Dorsolateral prefrontal cortex (tissue), 120 donors: ENCODE measurements at regions of chr11 and their contacts with region 1.

Region 1: DNA sequence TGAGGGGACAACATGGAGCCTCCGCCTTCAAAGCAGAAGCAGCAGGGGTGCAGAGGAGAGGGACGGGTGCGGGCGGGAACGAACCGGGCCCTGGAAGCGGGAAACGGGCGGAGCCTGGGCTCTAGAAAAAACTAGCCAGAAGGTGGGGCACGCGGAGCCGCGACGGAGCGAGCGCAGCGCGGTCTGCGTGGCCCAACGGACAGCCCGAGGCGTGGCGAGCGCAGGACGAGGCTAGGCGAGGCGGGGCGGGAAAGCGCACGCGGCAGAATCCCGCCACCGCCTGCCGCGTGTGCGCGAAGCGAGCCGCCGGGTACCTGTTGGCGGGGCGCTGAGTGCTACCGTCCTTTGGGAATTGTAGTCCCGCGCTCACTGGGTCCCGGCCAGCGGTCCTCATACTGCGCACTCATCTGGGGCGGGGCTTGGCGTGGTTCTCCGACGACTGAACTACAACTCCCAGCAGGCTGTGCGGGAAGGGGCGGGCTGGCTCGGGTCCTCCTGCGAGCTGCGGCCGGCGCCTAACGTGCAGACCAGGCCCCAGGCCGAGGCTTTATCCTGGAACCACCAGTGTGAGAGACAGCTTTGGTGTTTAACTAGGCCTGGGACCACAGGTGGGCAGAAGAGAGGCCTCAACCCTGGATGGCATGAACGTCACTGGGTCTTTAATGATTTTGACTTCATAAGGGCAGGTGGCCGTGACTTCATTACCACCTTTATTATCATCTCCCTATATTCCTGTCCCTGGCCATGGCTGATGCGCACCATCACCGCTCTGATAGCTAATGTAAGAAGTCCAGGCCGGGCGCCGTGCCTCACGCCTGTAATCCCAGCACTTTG is at the start of gene ATL3:
- DNase-seq: peak; percentile 97 to 99 (median 98)
- H3K4me3 ChIP-seq: peak within 1 kb of the TSS; percentile 66 to 99 (median 92)
- H3K27ac ChIP-seq: peak within 1 kb of the TSS; percentile 18 to 99 (median 97)
- H3K27me3 ChIP-seq: no peaks in the 10 kb centered on the region
- CTCF ChIP-seq: peak in 46 of 56 donors; percentile 10 to 64 (median 42)
- total RNA-seq, gene ATL3: 15.2 to 40.3 (median 25.4) TPM

Region 2: DNA sequence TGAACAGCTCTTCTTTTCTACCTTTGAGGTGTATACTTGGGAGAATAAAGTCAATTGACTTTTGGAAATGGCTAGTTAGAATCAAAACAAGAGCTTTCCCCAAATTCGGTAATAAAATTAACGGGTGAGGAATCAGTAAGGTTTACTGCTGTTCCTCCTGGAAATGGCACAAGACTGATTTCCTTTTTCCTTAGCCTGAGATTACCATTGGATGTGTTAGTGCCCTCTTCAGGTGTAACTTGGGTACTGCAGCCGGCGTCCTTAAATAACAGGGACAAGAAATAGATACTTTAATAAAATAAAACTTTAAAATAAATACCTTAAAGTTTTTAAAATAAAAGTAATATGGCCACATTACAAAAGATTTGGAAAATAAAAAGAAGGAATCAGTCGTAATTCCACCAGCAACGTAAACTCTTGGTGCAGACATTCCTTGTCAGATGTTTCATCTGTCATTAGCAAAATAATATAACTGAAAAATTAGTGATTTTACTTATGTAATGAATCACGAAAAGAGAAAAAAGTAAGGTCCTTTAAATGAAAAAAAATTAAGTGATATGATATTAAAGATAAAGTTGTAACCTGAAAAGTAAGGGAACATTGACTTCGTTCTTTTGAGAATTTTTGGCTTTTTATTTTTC is 67.3 kb after region 1 on chr11:
- intact Hi-C with region 1: loop called in 1 of 2 experiments (anchors 1 kb)
- DNase-seq: peak; percentile 56 to 90 (median 66)
- H3K4me3 ChIP-seq: peak overlapping the region in 4 of 59 donors; percentile 2 to 36 (median 21)
- H3K27ac ChIP-seq: peak overlapping the region in 8 of 59 donors; percentile 4 to 53 (median 22)
- H3K27me3 ChIP-seq: no peaks in the 10 kb centered on the region
- CTCF ChIP-seq: peak; percentile 90 to 99 (median 96)

Region 3: DNA sequence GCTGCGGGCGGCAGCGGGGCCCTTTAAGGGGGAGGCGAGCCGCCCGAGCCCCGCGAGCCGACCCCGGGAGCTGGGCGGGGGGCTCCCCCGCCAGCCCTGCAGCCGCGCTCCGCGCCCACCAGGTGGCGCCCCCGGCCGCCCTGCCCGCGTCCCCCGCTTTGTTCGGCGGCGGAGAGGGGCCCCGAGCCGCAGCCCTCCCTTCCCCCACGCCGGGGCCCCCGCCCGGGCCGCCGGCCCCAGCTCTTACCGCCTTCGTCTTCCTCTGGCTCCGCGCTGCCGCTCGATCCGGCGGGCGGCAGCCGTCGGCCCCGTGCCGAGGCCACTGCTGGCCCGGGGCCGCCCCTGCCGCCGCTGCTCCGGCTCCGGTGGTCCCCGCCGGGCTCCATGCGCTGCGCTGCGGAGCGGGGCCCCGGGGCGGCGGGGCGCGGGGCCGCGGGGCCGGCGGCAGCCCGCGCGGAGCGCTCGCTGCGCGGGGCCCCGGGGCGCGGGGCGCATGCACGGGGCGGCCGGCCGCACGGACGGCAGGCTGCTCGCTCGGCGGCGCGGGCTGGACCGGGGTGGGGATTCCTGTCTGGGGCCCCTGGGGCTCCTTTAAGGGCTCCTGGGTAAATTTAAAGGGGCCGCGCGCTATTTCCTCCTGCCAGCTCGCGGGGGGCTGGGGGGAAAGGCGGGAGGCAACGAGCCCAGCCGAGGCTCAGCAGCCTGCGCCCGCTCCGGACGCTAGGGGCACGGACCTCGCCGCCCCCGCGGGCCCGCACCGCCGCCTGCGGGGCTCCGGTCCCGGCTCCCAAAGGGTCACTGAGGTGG is 96.9 kb after region 1 on chr11 and contains the start of gene ZFTA:
- intact Hi-C with region 1: loop called in 1 of 2 experiments (anchors 10 kb)
- DNase-seq: peak in 5 of 10 donors; percentile 52 to 76 (median 59)
- H3K4me3 ChIP-seq: peak within 1 kb of the TSS; percentile 62 to 87 (median 78)
- H3K27ac ChIP-seq: peak within 1 kb of the TSS in 55 of 59 donors; percentile 29 to 89 (median 80)
- H3K27me3 ChIP-seq: no peaks in the 10 kb centered on the region
- CTCF ChIP-seq: peak in 41 of 56 donors; percentile 0 to 92 (median 64)
- total RNA-seq, gene ZFTA: 8.7 to 41.2 (median 25.3) TPM